Activated CD8-positive, alpha-beta memory T cell treated with anti-CD3 and anti-CD28 coated beads, Interleukin-2, amount 10 ng/mL, durations not matched to agents 7 days and 5 days (primary cell): ENCODE measurements at regions of chr12 and their contacts with region 1.

Region 1: DNA sequence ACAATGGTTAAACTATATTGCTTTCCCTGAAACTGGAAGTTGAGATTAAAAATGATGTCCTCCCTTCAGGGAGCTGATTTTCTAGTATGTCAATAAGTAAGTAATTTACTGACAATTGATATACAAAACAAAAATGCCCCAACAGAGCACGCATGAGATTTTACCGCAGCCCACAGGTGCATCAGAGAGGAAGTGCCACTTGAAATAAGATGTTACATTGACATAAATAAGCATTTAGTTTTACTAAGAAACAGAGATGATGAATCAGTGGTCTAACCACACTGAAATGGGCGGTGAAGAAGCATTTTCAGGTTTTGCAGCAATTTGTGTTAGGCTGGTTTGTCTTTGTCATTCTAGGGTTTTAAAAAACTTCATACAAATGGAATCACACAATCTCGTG is 8.8 kb upstream of the CLECL1 start:
- DNase-seq: peak; percentile 95
- ATAC-seq: peak; percentile 75
- H3K4me3 Mint-ChIP-seq: peak overlapping the region; percentile 77
- H3K27ac Mint-ChIP-seq: peak overlapping the region; percentile 99
- H3K4me1 Mint-ChIP-seq: peaks cover 72% of the 10 kb centered on the region
- H3K27me3 Mint-ChIP-seq: no peaks in the 10 kb centered on the region

Region 2: DNA sequence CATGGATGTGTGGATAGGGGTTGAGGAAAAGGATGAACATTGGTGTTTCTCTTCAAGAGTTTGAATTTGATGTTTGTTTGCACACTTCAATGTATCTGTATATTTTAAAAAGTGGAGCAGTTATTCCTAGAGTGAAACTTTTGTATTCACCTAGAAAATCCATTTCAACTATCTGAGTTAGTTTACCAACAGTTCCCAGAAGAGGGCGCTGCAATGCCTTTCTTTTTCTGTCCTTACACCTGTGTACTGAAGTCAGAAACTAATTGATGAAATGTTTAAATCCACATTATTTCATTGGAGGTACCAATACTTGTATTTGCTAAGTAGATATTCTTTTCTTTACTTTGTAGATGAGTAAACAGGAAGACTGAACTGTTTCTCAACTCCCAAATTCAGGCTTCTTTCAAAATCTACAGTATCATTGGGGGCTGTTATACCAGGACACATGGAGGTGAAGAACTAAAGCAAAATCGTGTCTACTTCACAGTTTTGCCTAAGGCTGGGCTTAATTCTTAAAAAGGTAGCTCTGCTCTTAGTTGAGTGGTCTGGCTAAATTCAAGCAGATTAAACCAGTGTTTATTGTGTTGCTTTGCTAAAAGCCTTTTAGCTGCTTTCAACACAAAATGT is 107.4 kb before region 1 on chr12:
- CTCF ChIA-PET with region 1: interaction called, 10 read pairs
- DNase-seq: peak; percentile 85
- ATAC-seq: peak; percentile 75
- H3K4me3 Mint-ChIP-seq: no peak overlapping the region
- H3K27ac Mint-ChIP-seq: peak overlapping the region; percentile 39
- H3K4me1 Mint-ChIP-seq: peaks cover 33% of the 10 kb centered on the region
- H3K27me3 Mint-ChIP-seq: no peaks in the 10 kb centered on the region

Region 3: DNA sequence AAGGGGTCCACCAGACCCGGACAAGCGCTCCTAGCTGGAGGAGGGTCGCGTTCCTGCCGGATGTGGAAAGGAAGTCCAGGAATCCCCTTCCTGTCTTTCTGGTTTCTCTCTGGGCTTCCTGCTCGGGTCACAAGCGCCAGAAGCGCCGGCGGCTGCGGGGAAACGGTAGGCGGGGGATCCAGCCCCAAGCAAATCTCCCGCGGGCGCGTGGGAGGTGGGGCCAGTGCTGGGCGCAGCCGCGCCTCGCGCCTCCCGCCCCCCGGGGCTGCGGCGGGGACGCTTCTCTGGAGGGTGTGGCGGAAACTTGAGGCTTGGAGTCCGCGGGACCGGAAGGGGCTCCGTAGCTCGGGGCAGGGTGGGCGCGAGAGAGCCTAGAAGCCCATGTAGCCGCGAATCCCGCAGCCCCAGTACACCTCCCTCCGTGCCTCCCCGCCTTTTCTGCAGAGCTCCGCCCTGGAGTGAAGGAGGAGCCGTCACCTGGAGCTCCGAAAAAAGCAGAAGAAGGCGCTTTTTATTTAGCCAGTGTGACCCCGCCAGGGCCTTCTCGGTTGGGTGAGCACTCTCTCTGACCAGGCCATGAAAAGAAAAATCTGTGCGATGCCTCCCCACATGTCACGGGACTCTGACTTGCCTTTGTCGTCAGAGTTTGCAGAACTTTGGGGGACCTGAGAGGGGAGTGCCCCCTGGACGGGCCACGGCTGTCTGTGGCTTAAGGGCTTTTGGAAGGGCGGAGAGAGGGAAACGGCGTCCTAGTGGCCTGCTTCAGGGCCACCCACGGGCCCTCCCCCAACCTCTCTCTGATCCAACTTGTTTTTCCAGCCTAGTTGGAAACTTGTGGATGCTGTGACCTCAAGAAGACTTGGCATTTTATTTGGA is 93.7 kb before region 1 on chr12:
- CTCF ChIA-PET with region 1: interaction called, 10 read pairs
- DNase-seq: peak; percentile 97
- ATAC-seq: peak; percentile 77
- H3K4me3 Mint-ChIP-seq: peak overlapping the region; percentile 95
- H3K27ac Mint-ChIP-seq: peak overlapping the region; percentile 94
- H3K4me1 Mint-ChIP-seq: peaks cover 59% of the 10 kb centered on the region
- H3K27me3 Mint-ChIP-seq: peaks cover 2% of the 10 kb centered on the region

Region 4: DNA sequence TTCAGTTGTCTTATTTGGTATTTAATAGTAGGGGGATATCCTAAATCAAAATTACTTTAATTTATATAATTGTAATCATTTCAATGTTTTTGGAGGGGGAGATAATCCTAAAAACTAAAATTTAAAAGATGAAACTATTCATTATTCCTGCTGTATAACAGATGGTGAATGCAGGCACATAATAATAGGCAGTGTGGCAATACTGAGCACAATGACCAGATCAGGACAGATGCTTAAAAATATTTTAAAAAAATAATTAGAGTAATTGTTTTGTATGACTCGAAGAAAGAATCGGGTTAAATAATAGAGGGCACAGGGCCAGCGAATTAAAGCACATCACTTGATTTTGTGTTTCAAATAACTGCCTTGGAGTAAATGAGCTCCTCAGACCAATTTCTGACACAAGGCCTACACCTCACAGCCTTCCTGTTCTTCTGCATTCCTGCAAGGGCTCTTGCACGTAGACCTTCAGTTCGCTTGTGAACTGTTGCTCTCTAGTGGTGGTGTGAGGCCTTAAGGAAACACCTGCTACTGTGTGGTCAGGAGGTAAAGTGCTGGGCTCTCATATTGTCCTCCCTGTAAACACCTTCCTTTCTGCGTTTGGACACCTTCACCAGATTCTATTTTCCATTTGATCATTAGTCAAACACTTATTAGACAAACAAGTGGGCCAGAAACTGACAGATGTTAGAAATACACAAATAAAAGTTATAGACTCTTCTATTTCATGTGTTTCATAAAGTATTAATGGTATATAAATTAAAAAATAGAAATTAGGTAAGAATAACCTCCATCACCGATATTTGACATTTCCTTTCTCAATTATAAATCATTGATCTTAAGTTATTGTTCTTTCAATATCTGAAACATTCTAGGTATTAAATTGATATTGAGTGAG is 56.2 kb after region 1 on chr12:
- CTCF ChIA-PET with region 1: interaction called, 503 read pairs
- DNase-seq: peak; percentile 88
- ATAC-seq: peak; percentile 86
- H3K4me3 Mint-ChIP-seq: peak overlapping the region; percentile 6
- H3K27ac Mint-ChIP-seq: peak overlapping the region; percentile 23
- H3K4me1 Mint-ChIP-seq: peaks cover 46% of the 10 kb centered on the region
- H3K27me3 Mint-ChIP-seq: no peaks in the 10 kb centered on the region